Activated CD4-positive, alpha-beta memory T cell treated with anti-CD3 and anti-CD28 coated beads, Interleukin-2, amount 10 ng/mL, durations not matched to agents 7 days and 5 days (primary cell): ENCODE measurements at regions of chr17 and their contacts with region 1.

Region 1: GRCh38 chr17:49694847-49695683 is 12.7 kb downstream of the SLC35B1 start:
- DNase-seq: peak; percentile 75
- H3K4me3 Mint-ChIP-seq: no peak overlapping the region
- H3K27ac Mint-ChIP-seq: peak overlapping the region; percentile 77
- H3K4me1 Mint-ChIP-seq: peaks cover 25% of the 10 kb centered on the region
- H3K27me3 Mint-ChIP-seq: no peaks in the 10 kb centered on the region

Region 2: GRCh38 chr17:49575579-49576087 is 119.4 kb before region 1 on chr17 and contains the start of gene NXPH3:
- CTCF ChIA-PET with region 1: interaction called, 95 read pairs
- POLR2A ChIA-PET with region 1: interaction called, 19 read pairs
- DNase-seq: peak; percentile 74
- H3K4me3 Mint-ChIP-seq: peak within 1 kb of the TSS; percentile 52
- H3K27ac Mint-ChIP-seq: no peak within 1 kb of the TSS
- H3K4me1 Mint-ChIP-seq: peaks cover 21% of the 10 kb centered on the region
- H3K27me3 Mint-ChIP-seq: peaks cover 63% of the 10 kb centered on the region
- total RNA-seq, gene NXPH3: not detected